ENCODE measurements at regions of chr2 and their contacts with region 1.

Region 1: GRCh38 chr2:227363756-227364155 is 15.3 kb downstream of the TM4SF20 start:
- H3K4me3 Mint-ChIP-seq: no peak overlapping the region
- H3K27ac Mint-ChIP-seq: peak overlapping the region; percentile 23
- H3K4me1 Mint-ChIP-seq: peaks cover 21% of the 10 kb centered on the region
- H3K27me3 Mint-ChIP-seq: no peaks in the 10 kb centered on the region

Region 2: DNA sequence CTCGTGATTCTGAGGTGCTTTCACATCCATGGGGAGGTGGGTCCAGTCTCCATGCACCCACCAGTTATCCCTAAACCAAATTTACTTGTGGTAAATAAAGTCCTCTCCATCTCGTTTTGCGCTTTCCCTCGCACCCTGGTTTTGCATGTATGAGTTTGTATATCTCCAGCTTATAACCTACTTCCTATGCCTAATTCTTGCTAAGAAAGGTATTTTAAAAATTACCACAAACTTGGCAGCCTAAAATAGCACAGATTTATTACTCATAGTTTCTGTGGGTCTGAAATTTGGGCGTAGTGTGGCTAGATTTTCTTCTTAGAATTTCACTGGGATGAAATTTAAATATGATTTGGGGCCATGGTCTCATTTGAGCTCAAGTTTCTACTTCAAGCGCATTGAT is 1452.7 kb before region 1 on chr2:
- intact Hi-C with region 1: no loop called
- H3K4me3 Mint-ChIP-seq: no peak overlapping the region
- H3K27ac Mint-ChIP-seq: no peak overlapping the region
- H3K4me1 Mint-ChIP-seq: no peaks in the 10 kb centered on the region
- H3K27me3 Mint-ChIP-seq: peaks cover 3% of the 10 kb centered on the region

Region 3: DNA sequence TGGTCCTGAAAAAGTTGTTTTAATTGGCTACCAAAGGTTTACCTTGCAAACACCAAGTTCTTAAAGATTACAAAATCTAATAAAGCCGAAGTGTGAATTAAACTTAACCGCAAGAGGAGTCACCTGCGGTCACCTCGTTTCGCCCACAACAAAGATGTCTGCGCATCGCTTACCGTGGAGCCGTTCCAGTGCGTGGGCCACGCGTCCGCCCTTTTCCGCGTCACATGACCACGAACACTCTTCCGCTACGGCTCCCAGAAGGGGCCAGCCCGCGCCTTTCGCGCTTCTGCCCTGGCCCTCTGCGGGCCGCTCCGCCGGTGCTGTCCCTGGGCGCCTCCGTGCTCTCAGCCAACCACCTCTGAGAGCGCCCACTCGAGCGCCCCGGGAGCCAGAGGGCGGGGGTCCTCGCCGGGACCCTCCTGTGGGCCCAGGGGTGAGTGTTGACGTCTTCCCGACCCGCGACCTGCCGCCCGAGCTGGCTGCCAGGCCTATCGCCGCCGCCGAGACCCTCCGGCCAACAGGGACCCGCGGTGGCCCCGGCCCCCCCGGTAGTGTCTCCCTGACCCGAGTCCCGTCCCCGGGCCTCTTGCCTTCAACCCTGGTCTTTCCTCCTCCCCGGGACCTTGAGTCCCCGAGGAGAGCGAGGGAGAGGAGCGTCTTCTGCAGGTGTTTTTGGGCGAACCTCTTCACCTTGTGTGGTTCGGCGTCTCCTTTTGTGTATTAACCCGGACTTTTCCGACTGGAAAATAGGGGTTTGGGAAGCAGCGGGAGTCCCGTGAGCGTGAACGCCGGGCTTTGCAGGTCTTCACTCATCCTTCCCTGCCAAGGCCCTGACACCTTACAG is 38.5 kb before region 1 on chr2 and contains the start of gene MFF:
- intact Hi-C with region 1: loop called (anchors 5 kb)
- H3K4me3 Mint-ChIP-seq: peak within 1 kb of the TSS; percentile 88
- H3K27ac Mint-ChIP-seq: peak within 1 kb of the TSS; percentile 87
- H3K4me1 Mint-ChIP-seq: peaks cover 16% of the 10 kb centered on the region
- H3K27me3 Mint-ChIP-seq: peaks cover 9% of the 10 kb centered on the region

Region 4: GRCh38 chr2:227471924-227472264 is 108.1 kb after region 1 on chr2 and contains the start of gene AGFG1:
- intact Hi-C with region 1: loop called (anchors 5 kb)
- H3K4me3 Mint-ChIP-seq: peak within 1 kb of the TSS; percentile 76
- H3K27ac Mint-ChIP-seq: peak within 1 kb of the TSS; percentile 64
- H3K4me1 Mint-ChIP-seq: peaks cover 13% of the 10 kb centered on the region
- H3K27me3 Mint-ChIP-seq: no peaks in the 10 kb centered on the region

Region 5: GRCh38 chr2:227766373-227766883 is 402.7 kb after region 1 on chr2:
- intact Hi-C with region 1: loop called (anchors 2 kb)
- H3K4me3 Mint-ChIP-seq: no peak overlapping the region
- H3K27ac Mint-ChIP-seq: no peak overlapping the region
- H3K4me1 Mint-ChIP-seq: peaks cover 5% of the 10 kb centered on the region
- H3K27me3 Mint-ChIP-seq: no peaks in the 10 kb centered on the region

Measured in dendritic cell treated with granulocyte-macrophage colony-stimulating factor and Interleukin-4, amounts not matched to agents 40 ng/mL and 50 ng/mL, for 4 days (primary cell).